ENCODE measurements at regions of chr16 and their contacts with region 1.

Region 1: DNA sequence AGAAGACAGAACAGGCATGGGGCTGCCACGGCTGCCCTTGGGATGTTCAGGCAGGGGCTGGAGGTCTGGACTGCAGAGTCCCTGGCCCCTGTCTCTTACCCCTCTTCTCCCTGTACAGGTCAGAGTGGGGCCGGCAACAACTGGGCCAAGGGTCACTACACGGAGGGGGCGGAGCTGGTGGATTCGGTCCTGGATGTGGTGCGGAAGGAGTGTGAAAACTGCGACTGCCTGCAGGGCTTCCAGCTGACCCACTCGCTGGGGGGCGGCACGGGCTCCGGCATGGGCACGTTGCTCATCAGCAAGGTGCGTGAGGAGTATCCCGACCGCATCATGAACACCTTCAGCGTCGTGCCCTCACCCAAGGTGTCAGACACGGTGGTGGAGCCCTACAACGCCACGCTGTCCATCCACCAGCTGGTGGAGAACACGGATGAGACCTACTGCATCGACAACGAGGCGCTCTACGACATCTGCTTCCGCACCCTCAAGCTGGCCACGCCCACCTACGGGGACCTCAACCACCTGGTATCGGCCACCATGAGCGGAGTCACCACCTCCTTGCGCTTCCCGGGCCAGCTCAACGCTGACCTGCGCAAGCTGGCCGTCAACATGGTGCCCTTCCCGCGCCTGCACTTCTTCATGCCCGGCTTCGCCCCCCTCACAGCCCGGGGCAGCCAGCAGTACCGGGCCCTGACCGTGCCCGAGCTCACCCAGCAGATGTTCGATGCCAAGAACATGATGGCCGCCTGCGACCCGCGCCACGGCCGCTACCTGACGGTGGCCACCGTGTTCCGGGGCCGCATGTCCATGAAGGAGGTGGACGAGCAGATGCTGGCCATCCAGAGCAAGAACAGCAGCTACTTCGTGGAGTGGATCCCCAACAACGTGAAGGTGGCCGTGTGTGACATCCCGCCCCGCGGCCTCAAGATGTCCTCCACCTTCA is 11.7 kb downstream of the TUBB3 start:
- DNase-seq: no peak
- ATAC-seq: no peak
- H3K4me3 ChIP-seq: no peak overlapping the region
- H3K27ac ChIP-seq: no peak overlapping the region
- H3K4me1 ChIP-seq: no peaks in the 10 kb centered on the region
- H3K27me3 ChIP-seq: no peaks in the 10 kb centered on the region
- CTCF ChIP-seq: no peak

Region 2: GRCh38 chr16:89759746-89760340 is 175.0 kb before region 1 on chr16:
- intact Hi-C with region 1: loop called (anchors 5 kb)
- DNase-seq: no peak
- ATAC-seq: peak; percentile 46
- H3K4me3 ChIP-seq: no peak overlapping the region
- H3K27ac ChIP-seq: no peak overlapping the region
- H3K4me1 ChIP-seq: no peaks in the 10 kb centered on the region
- H3K27me3 ChIP-seq: no peaks in the 10 kb centered on the region
- CTCF ChIP-seq: no peak